GM13976 (cell line): ENCODE measurements at regions of chr5 and their contacts with region 1.

Region 1: DNA sequence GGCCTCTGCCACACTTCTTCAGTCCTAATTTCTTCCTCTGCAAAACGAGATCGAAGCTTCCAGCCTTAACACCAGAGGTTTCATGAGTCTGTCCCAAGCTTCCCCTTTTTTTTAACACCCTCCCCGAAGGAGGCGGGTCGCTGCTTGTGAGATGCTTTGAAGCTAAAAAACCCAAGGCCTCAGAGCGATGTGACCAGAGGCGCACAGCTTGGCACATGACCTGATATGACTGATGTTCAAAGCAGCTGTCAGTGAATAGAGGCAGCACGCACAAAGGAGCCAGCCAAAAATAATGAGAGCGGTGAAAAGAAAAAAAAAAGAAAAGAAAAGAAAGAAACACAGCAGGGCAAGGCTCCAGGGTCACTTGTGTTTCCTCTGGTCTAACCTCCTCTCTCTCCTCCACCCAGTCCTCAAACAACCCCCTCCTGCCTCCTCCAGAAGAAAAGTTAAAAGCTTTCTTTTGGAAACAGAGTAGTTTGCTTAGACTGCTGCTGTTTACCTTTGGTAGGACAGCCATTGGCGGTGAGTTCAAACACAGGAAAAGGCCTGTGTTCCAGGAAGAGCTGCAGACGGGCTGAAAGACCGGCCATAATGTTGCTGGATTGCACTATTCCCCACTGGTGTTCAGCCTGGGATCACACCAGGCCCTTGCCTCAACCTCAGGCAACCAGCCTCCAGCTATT is 10.9 kb upstream of the ZNF366 start:
- DNase-seq: no peak
- CTCF ChIP-seq: no peak

Region 2: DNA sequence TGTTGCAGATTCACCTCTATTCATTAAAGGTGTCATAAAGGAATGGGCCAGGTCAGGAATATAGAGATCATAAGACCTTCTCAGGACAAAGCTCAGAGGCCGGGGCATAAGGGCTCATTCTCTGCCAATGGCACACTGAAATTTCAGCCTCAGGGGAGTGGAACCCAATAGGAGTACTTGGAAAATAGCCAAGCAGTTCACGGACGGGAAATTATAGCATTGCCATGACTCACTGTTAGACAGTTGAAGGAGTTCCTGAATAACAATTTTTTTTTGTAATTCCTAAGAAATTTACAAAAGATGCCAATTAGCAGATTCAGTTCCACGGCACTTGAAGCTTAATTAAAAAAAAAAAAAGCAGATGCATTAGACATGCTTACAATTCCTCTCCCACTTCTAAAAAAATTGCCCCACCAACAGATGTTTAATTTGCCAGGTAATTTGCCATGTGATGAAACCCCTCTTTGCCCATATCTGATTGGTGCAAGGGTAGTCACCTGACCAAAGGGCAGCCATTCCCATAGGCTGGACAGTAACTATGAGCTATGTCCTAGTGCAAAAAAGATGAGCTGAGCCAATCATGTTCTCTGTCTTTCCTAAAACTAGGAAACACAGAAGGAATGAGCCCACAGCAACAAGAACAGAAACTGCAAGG is 139.4 kb before region 1 on chr5:
- in situ Hi-C with region 1: loop called (anchors 5 kb)
- DNase-seq: no peak
- CTCF ChIP-seq: no peak

Region 3: DNA sequence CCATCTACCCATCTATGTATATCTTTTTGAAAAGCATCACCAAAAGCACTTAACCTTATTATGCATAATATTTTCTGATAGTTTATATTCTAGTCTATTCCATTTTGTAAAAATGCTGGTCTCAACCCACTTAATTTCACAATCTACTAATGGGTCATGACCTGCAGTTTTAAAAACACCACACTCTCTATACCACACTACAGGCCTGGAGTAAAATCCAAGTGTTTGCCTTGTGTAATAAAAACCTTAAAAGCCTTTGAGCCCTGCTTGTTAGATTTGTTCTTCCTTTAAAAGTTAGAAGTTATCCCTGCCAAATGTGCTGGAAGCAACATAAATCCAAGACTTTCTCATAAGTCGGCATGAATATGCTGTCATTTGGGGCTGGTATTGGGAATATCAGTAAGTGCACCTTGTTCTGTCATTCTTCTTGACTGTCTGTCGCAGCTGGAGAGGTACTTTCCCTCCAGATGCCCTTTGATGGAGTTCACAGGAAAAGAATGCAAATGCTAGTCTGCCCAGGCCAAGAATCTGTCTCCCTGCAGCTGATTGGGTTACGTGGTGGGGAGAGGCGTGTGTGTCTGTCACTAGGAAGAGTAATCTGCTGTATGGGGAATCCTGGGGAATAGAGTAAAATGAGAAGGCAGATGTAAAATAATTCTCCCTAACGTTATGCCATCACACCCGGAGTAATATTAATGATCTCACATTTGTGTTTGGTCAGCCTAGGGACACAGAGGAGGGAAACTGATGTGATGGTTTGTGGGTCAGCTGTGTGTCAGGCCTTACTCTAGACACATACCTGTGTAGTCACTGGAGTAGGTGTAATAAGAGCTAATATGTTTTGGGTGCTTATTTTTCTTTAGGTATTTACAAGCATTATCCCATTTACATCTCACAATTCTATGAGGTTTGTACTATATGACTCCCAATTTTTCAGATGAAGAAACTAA is 90.4 kb before region 1 on chr5:
- in situ Hi-C with region 1: no loop called
- DNase-seq: no peak
- CTCF ChIP-seq: no peak